ENCODE measurements at regions of chr9 and their contacts with region 1.

Region 1: DNA sequence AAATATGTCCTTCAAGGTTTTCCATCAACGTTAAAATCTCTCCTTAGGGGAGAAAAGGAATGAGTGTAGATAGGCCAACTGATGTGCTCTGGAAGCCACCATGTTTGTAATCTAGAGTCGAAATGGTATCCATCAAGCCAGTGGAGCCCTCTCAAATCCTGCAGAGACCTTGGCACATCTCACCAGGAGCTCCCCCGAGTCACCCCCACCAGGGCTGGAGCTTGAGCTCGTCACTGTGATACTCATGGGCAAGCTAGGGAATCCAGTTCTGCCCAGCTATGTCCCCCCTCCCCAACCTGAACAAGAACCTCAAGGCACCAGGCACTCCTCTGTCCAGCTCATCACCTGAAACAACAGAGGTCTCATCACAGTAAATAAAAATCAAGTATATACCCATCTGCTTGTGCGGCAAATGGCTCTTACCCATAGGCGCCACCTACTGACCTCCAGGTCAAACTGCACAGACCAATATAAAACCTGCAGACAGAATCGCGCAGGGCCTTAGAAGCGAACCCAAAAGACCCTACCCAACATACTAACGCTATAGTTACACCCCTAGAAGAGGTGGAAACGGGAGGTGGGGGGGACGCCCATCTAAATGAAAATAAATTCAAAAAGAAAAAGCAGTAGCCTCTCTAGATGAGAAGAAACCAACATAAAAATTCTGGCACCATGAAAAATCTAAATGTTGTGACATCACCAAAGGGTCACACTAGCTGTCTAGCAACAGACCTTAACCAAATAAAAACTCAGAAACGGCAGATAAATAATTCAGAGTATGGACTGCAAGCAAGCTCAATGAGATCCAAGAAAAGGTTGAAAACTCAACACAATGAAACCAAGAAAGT is 75.0 kb downstream of the TTC39B start:
- DNase-seq: no peak
- H3K4me3 ChIP-seq: no peak overlapping the region
- CTCF ChIP-seq: peak; percentile 37

Region 2: DNA sequence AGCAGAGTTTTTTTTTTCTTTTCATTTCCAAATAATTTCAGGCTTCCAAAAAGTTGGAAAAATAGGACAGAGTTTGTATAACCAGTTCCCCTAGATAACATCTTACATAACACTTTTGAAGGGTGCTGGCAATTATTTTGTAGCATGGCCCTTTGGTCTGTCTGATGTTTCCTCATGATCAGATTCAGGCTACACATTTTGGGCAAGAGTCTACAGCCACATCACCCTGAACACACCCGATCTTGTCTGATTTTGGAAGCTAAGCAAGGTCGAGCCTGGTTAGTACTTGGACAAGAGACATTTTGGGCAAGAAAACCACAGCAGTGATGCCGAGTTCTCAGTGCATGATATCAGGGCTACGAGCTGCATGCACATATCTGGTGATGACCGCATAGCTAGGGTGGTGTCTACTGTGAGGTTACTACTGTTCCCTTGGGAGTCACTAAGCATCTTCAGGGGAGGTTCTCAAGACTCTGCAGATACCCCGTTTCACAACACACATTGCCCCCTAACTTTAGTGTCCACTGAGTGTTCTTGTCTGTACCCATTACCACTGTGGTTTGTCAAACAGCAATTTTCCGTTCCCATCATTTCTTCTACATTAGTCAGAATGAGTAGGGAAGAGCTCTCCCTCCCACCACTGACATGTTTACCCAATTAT is 11.2 kb before region 1 on chr9:
- CTCF ChIA-PET with region 1: interaction called, 19 read pairs
- POLR2A ChIA-PET with region 1: no interaction called
- DNase-seq: no peak
- H3K4me3 ChIP-seq: no peak overlapping the region
- CTCF ChIP-seq: no peak

Measured in AG04449 (cell line).